ENCODE measurements at regions of chr13 and their contacts with region 1.

Region 1: GRCh38 chr13:101942038-101942437 is 459.8 kb downstream of the FGF14 start:
- DNase-seq: no peak
- ATAC-seq: peak; percentile 56 to 65
- H3K4me3 ChIP-seq: no peak overlapping the region
- H3K27ac ChIP-seq: no peak overlapping the region
- H3K4me1 ChIP-seq: no peaks in the 10 kb centered on the region
- H3K27me3 ChIP-seq: no peaks in the 10 kb centered on the region
- CTCF ChIP-seq: peak; percentile 25 to 64 (median 59)
- POLR2A ChIP-seq: no peak

Region 2: GRCh38 chr13:101579281-101579802 is 362.7 kb before region 1 on chr13:
- in situ Hi-C with region 1: no loop called
- intact Hi-C with region 1: no loop called
- DNase-seq: no peak
- ATAC-seq: no peak
- H3K4me3 ChIP-seq: no peak overlapping the region
- H3K27ac ChIP-seq: no peak overlapping the region
- H3K4me1 ChIP-seq: no peaks in the 10 kb centered on the region
- H3K27me3 ChIP-seq: no peaks in the 10 kb centered on the region
- CTCF ChIP-seq: no peak
- POLR2A ChIP-seq: no peak

Region 3: GRCh38 chr13:102091231-102091630 is 149.2 kb after region 1 on chr13:
- in situ Hi-C with region 1: no loop called
- intact Hi-C with region 1: loop called (anchors 1 kb)
- DNase-seq: no peak
- ATAC-seq: no peak
- H3K4me3 ChIP-seq: no peak overlapping the region
- H3K27ac ChIP-seq: no peak overlapping the region
- H3K4me1 ChIP-seq: peaks cover 8 to 10% of the 10 kb centered on the region in 2 donors
- H3K27me3 ChIP-seq: no peaks in the 10 kb centered on the region
- CTCF ChIP-seq: no peak
- POLR2A ChIP-seq: no peak

Region 4: DNA sequence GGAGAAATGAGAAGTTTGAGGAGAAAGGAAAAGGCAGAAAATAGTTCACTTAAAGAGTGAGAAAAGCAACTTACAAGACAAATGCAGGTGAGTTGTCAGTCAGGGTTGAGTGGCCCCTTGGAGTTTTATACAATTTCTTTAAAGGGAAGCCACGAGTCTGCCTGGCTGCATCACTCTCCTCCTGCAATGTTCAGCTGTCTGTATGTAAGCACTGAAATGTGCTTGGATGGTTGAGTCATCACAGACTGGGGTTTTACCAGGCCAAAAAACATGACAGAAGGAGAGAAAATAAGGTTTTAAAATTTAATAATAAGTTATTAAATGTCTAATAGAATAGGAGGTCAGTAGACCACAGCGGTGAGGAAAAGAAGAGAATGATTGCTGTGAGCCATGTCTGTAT is 510.8 kb after region 1 on chr13:
- in situ Hi-C with region 1: loop called in 2 of 4 experiments (anchors 10 to 25 kb)
- intact Hi-C with region 1: loop called (anchors 1 kb)
- DNase-seq: no peak
- ATAC-seq: no peak
- H3K4me3 ChIP-seq: no peak overlapping the region
- H3K27ac ChIP-seq: no peak overlapping the region
- H3K4me1 ChIP-seq: no peaks in the 10 kb centered on the region
- H3K27me3 ChIP-seq: no peaks in the 10 kb centered on the region
- CTCF ChIP-seq: no peak
- POLR2A ChIP-seq: no peak

Region 5: DNA sequence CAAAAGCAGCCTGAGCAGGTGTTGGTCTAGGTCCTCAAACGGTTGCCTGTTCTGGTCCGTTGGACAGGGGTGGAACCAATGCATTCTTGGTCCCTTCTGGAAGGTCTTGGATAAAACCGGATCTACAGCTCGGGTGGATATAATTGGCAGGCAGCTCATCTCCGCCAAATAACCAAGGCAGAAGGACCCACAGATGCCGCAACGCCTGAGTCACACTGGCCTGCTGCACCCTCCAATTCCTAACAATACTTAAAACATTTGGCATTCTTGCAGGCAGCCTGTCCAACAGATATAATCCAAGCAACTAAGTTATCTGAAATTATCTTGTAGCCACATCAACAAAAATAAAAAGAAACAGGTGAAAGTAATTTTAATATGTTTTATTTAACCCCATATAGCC is 518.8 kb after region 1 on chr13:
- in situ Hi-C with region 1: loop called in 2 of 4 experiments (anchors 10 to 25 kb)
- intact Hi-C with region 1: loop called (anchors 1 kb)
- DNase-seq: no peak
- ATAC-seq: no peak
- H3K4me3 ChIP-seq: no peak overlapping the region
- H3K27ac ChIP-seq: no peak overlapping the region
- H3K4me1 ChIP-seq: no peaks in the 10 kb centered on the region
- H3K27me3 ChIP-seq: no peaks in the 10 kb centered on the region
- CTCF ChIP-seq: no peak
- POLR2A ChIP-seq: no peak

Region 6: GRCh38 chr13:102466610-102467190 is 524.7 kb after region 1 on chr13:
- in situ Hi-C with region 1: loop called in 1 of 4 experiments (anchors 25 kb)
- intact Hi-C with region 1: no loop called
- DNase-seq: no peak
- ATAC-seq: no peak
- H3K4me3 ChIP-seq: no peak overlapping the region
- H3K27ac ChIP-seq: no peak overlapping the region
- H3K4me1 ChIP-seq: no peaks in the 10 kb centered on the region
- H3K27me3 ChIP-seq: no peaks in the 10 kb centered on the region
- CTCF ChIP-seq: no peak
- POLR2A ChIP-seq: no peak

Region 7: DNA sequence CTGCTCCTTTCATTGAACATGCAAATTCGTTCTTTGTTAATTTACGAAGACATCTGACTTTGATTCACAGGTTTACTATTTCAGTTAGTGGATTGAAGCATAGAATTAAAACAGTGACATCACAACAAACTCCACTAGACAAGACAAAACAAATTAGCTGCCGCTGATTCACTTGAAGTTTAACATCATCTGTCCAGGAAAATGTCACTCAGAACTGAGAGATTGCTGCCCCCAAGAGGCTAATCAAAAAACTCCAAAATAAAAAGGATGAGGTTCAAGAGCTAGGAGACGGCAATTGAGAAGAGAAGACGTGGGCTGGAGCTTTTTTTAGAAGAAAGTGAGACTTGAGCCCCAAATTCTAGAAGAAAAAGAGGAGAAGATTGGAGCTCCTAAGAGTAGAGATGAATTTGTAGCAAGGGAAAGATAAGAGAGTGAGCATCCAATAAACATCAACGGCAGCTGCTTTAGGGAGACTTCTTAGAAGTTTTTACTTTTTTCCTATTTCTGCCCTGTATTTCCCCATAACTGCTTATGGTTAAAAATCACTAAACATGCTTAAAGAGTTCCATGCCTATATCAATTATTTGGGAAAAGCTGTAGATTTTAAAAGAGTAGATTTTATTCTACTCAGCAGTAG is 614.0 kb after region 1 on chr13:
- in situ Hi-C with region 1: loop called in 1 of 4 experiments (anchors 10 kb)
- intact Hi-C with region 1: loop called (anchors 5 kb)
- DNase-seq: no peak
- ATAC-seq: peak in 1 of 2 donors; percentile 36
- H3K4me3 ChIP-seq: no peak overlapping the region
- H3K27ac ChIP-seq: no peak overlapping the region
- H3K4me1 ChIP-seq: no peaks in the 10 kb centered on the region
- H3K27me3 ChIP-seq: no peaks in the 10 kb centered on the region
- CTCF ChIP-seq: peak in 1 of 5 experiments; percentile 17
- POLR2A ChIP-seq: no peak

Measured in gastrocnemius medialis (tissue), 4 donors.